Posterior vena cava (tissue), 2 donors: ENCODE measurements at regions of chr10 and their contacts with region 1.

Region 1: DNA sequence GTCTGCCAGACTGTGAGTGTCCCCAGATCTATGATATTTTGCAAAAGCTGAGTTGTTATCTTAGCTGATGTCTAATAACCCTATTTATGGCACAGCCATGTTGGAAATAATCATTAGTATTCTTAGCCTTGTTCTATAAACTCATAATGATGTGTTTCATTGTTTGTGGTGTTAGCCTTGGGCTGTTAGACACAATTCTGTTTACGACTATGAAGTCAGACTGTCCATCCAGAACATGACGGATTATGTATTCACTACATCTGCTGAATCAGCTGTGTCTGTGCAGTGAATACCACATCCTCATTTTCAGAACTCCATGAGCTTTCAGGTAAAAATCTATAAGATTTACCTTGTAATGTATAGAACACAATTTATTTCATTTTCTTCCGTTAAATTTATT is 577.1 kb downstream of the NRG3 start:
- DNase-seq: no peak

Region 2: DNA sequence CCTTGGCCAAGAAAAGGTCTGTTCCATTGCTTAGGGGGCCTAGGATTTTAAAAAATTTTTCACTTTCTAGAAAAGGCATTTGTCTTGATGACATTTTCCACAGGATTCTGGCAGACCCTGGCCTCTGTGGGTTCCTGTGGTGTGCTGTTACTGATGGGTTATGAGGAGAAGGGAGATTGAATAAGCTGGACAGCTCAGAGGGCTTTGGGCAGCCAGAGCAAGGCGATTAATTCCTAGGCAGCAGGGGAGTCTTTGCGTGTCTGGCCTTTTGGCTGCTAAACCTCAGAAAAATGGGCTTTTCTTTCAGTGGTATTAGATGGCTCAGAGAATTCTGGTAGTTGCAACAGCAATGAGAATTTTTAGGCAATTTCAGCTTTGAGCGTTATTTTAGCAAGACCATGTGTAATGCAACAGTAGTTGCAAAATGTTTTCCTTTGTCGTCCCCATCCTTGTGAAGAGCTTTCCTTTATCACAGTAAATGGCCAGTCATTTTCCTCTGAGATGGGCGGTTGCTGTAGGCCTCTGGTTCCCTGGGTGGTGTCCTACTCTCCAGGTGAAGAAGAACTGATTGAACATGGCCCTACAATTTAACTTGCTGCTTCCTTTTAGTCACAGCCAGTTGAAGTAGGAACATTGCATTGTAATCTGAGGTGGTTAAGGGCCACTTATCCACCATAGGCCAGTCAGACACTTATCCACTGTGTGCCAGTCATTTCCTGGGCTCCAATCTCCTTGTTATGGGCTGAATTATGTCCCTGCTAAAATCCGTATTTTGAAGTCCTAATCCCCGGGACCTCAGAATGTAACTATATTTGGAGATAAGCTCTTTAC is 1871.2 kb before region 1 on chr10:
- intact Hi-C with region 1: no loop called
- DNase-seq: no peak

Region 3: DNA sequence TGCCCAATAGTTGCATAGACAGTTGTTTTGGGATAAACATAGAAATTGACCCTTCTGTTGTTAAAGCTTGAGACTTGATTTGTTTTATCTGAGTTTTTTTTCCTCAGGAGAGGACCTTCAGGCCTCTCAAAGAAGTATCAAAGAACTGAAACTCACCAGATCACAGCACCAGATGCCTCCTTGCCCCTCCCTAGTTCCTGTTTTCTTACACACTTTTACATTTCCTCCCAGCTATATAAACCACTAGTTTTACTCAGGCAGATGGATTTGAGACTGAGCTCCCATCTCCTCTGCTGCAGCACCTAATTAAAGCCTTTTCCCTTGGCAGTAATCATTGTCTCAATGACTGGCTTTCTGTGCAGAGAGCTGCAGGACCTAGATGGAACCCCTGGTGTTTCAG is 727.6 kb before region 1 on chr10:
- intact Hi-C with region 1: loop called in 1 of 2 experiments (anchors 5 kb)
- DNase-seq: no peak

Region 4: DNA sequence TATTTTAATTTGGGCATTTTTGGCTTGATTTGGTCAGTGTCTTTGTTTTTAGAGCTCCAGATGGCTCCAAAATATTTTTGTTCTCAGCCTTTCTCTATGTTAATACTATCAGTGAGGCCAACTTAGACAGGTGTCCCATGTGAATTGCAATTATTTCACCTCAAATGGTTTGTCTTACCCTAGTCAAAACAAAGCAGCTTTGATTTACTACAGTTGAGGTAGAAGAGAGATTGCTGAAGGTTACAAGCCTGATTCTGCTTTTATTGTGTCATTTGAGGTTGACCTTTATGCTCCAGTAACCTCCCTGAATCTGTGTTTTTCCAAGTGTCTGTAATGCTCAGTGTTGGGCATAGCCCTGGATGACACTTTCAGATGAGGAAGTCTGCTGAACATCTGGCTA is 305.8 kb after region 1 on chr10:
- intact Hi-C with region 1: no loop called
- DNase-seq: no peak